Dorsolateral prefrontal cortex (tissue), 120 donors: ENCODE measurements at regions of chr9 and their contacts with region 1.

Region 1: DNA sequence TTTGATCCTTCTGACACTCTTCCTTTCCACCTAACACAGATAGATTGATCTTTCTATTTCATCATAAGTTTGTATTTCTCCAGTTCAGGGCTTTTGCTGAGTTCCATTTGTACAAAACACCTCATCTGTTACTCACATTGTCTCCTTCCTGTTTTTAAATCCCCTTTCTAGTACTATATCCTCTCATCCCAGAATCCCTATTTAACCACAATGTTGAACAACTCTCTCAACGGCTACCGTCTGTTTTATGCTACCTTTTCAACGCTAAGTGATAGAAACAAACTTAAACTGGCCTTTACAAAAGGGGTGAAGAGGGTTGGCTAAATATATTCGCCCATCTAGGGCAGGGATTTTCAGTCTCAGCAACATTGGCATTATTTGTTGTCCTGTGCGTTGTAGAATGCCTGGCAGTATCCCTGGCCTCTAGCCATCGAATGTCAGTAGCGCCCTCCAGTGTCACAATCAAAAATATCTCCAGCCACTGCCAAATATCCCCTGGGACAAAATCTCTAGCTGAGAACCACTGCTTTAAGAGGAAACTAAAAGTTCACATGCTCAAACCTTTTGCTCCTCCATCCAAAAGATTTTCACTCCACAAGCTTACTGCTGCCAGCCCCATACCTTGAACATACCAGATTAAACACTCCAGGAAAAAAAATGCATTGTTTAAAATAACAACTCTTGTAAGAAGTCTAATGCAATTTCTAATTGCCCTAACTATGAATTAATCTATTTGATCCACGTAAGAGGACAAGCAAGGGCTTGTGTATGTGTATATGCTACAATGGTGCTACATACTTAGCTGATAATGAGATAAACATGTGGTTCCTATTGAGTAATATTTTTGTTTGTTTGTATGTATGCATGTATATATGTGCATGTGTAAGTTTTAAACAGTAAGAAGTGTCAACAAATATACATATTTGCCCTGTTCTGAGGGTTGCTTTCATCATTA is 344.0 kb downstream of the PTPRD start:
- DNase-seq: peak in 4 of 10 donors; percentile 7 to 46 (median 36)
- H3K4me3 ChIP-seq: peak overlapping the region in 4 of 59 donors; percentile 13 to 23 (median 22)
- H3K27ac ChIP-seq: no peak overlapping the region
- H3K27me3 ChIP-seq: no peaks in the 10 kb centered on the region
- CTCF ChIP-seq: peak in 55 of 56 donors; percentile 22 to 74 (median 56)

Region 2: DNA sequence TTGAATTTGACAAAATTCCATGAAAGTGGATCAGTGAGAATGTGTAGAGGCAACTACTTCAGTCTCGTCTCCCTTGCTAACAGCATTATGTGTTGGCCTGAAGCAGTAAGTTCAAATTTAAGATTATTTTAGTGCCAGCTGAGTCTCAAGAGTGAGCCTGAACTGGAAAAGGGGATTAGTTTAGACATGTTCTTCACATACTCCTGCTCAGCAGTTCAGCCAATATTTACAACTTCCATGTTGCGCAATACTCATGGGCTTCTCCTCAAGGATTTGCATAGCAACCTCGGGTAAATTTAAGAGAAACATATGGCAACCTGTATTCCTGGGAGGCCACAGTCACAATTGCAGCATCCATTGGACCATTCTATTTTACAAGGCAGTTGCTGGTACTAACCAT is 209.8 kb before region 1 on chr9:
- intact Hi-C with region 1: loop called in 1 of 2 experiments (anchors 2 kb)
- DNase-seq: no peak
- H3K4me3 ChIP-seq: no peak overlapping the region
- H3K27ac ChIP-seq: no peak overlapping the region
- H3K27me3 ChIP-seq: no peaks in the 10 kb centered on the region
- CTCF ChIP-seq: no peak

Region 3: DNA sequence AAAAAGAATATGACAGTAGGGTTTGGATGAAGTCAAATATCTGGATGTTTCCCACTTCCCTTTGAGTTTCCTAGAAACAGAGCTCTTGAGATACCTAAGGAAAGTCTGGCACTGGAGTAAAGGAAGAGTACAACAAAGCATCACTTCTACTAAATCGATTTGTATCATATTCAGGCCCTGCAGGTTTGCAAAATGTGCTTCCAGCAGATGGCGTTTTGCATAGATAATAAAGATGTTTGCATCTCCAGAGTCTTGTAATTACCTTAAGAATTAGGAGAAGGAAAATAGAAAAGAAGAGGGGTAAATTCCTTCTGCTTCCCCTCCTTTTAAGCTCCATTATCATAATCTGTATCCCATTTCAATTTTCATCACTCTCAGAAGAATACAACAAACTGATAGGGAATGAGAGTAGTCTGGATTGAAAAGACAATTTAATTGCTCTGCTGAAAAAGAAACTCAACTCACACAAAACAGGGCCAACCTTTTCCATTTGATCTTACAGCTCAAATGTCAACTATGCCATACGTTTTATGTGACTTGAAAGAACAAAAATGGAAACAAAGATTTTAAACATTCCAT is 36.4 kb before region 1 on chr9:
- intact Hi-C with region 1: loop called in 1 of 2 experiments (anchors 5 kb)
- DNase-seq: peak in 2 of 10 donors; percentile 30 to 58
- H3K4me3 ChIP-seq: no peak overlapping the region
- H3K27ac ChIP-seq: peak overlapping the region in 27 of 59 donors; percentile 0 to 65 (median 22)
- H3K27me3 ChIP-seq: no peaks in the 10 kb centered on the region
- CTCF ChIP-seq: peak in 52 of 56 donors; percentile 14 to 63 (median 42)

Region 4: GRCh38 chr9:10253341-10253740 is 15.5 kb before region 1 on chr9:
- intact Hi-C with region 1: loop called in 1 of 2 experiments (anchors 1 kb)
- DNase-seq: no peak
- H3K4me3 ChIP-seq: no peak overlapping the region
- H3K27ac ChIP-seq: no peak overlapping the region
- H3K27me3 ChIP-seq: no peaks in the 10 kb centered on the region
- CTCF ChIP-seq: no peak

Region 5: GRCh38 chr9:10512144-10512543 is 243.3 kb after region 1 on chr9:
- intact Hi-C with region 1: no loop called
- DNase-seq: no peak
- H3K4me3 ChIP-seq: no peak overlapping the region
- H3K27ac ChIP-seq: no peak overlapping the region
- H3K27me3 ChIP-seq: no peaks in the 10 kb centered on the region
- CTCF ChIP-seq: no peak